ENCODE measurements at regions of chr7 and their contacts with region 1.

Region 1: GRCh38 chr7:75866489-75867389 is 12.1 kb upstream of the RHBDD2 start:
- DNase-seq: peak; percentile 8 to 65 (median 28)
- H3K4me3 ChIP-seq: no peak overlapping the region
- H3K4me3 Mint-ChIP-seq: no peak overlapping the region
- H3K27ac ChIP-seq: no peak overlapping the region
- H3K27ac Mint-ChIP-seq: peak overlapping the region in 1 of 8 donors; percentile 38
- H3K4me1 ChIP-seq: no peaks in the 10 kb centered on the region
- H3K4me1 Mint-ChIP-seq: peaks cover 0 to 15% (median 5%) of the 10 kb centered on the region in 3 donors
- H3K27me3 ChIP-seq: peaks cover 5% of the 10 kb centered on the region
- H3K27me3 Mint-ChIP-seq: peaks cover 7 to 15% of the 10 kb centered on the region in 2 donors

Region 2: GRCh38 chr7:76020031-76020714 is 153.4 kb after region 1 on chr7:
- CTCF ChIA-PET with region 1: interaction called, 60 read pairs
- POLR2A ChIA-PET with region 1: interaction called, 3 read pairs
- DNase-seq: peak; percentile 52 to 72 (median 64)
- H3K4me3 ChIP-seq: no peak overlapping the region
- H3K4me3 Mint-ChIP-seq: no peak overlapping the region
- H3K27ac ChIP-seq: no peak overlapping the region
- H3K27ac Mint-ChIP-seq: peak overlapping the region in 1 of 8 donors; percentile 35
- H3K4me1 ChIP-seq: peaks cover 9% of the 10 kb centered on the region
- H3K4me1 Mint-ChIP-seq: peaks cover 7 to 18% (median 12%) of the 10 kb centered on the region in 3 donors
- H3K27me3 ChIP-seq: no peaks in the 10 kb centered on the region
- H3K27me3 Mint-ChIP-seq: no peaks in the 10 kb centered on the region

Measured in CD8-positive, alpha-beta memory T cell (primary cell).